B cell (primary cell): ENCODE measurements at regions of chr2 and their contacts with region 1.

Region 1: GRCh38 chr2:130372055-130372832 is 16.4 kb downstream of the PTPN18 start:
- DNase-seq: peak; percentile 89
- ATAC-seq: peak; percentile 82
- H3K4me3 ChIP-seq: peak overlapping the region; percentile 66 to 82 (median 75)
- H3K4me3 Mint-ChIP-seq: peak overlapping the region; percentile 99
- H3K27ac ChIP-seq: peak overlapping the region; percentile 48 to 76
- H3K27ac Mint-ChIP-seq: peak overlapping the region; percentile 99
- H3K4me1 ChIP-seq: peaks cover 32 to 62% of the 10 kb centered on the region in 2 donors
- H3K4me1 Mint-ChIP-seq: peaks cover 65% of the 10 kb centered on the region
- H3K27me3 ChIP-seq: no peaks in the 10 kb centered on the region
- H3K27me3 Mint-ChIP-seq: no peaks in the 10 kb centered on the region
- CTCF ChIP-seq: peak; percentile 81

Region 2: GRCh38 chr2:130355578-130356431 is 16.4 kb before region 1 on chr2 and contains the start of gene PTPN18:
- CTCF ChIA-PET with region 1: interaction called, 9 read pairs
- POLR2A ChIA-PET with region 1: no interaction called
- intact Hi-C with region 1: loop called (anchors 1 kb)
- DNase-seq: peak; percentile 72
- ATAC-seq: peak; percentile 93
- H3K4me3 ChIP-seq: peak within 1 kb of the TSS in 4 of 5 experiments; percentile 50 to 73 (median 69)
- H3K4me3 Mint-ChIP-seq: peak within 1 kb of the TSS; percentile 86
- H3K27ac ChIP-seq: no peak within 1 kb of the TSS
- H3K27ac Mint-ChIP-seq: peak within 1 kb of the TSS; percentile 48
- H3K4me1 ChIP-seq: peaks cover 9 to 31% of the 10 kb centered on the region in 2 donors
- H3K4me1 Mint-ChIP-seq: peaks cover 33% of the 10 kb centered on the region
- H3K27me3 ChIP-seq: peaks cover 0 to 7% (median 3%) of the 10 kb centered on the region in 4 experiments
- H3K27me3 Mint-ChIP-seq: no peaks in the 10 kb centered on the region
- CTCF ChIP-seq: peak; percentile 70
- total RNA-seq, gene PTPN18: 101 and 102 TPM in 2 replicates

Region 3: GRCh38 chr2:130385709-130386108 is 13.5 kb after region 1 on chr2:
- CTCF ChIA-PET with region 1: interaction called, 25 read pairs
- POLR2A ChIA-PET with region 1: interaction called, 7 read pairs
- intact Hi-C with region 1: no loop called
- DNase-seq: peak; percentile 41
- ATAC-seq: peak; percentile 60
- H3K4me3 ChIP-seq: no peak overlapping the region
- H3K4me3 Mint-ChIP-seq: peak overlapping the region; percentile 38
- H3K27ac ChIP-seq: peak overlapping the region in 1 of 2 donors; percentile 14
- H3K27ac Mint-ChIP-seq: peak overlapping the region; percentile 86
- H3K4me1 ChIP-seq: peaks cover 35 to 74% of the 10 kb centered on the region in 2 donors
- H3K4me1 Mint-ChIP-seq: peaks cover 77% of the 10 kb centered on the region
- H3K27me3 ChIP-seq: no peaks in the 10 kb centered on the region
- H3K27me3 Mint-ChIP-seq: no peaks in the 10 kb centered on the region
- CTCF ChIP-seq: no peak

Region 4: GRCh38 chr2:130391058-130391871 is 19.0 kb after region 1 on chr2:
- CTCF ChIA-PET with region 1: interaction called, 25 read pairs
- POLR2A ChIA-PET with region 1: interaction called, 7 read pairs
- intact Hi-C with region 1: loop called (anchors 1 kb)
- DNase-seq: peak; percentile 71
- ATAC-seq: peak; percentile 89
- H3K4me3 ChIP-seq: peak overlapping the region; percentile 48 to 72 (median 63)
- H3K4me3 Mint-ChIP-seq: peak overlapping the region; percentile 94
- H3K27ac ChIP-seq: peak overlapping the region; percentile 14 to 21
- H3K27ac Mint-ChIP-seq: peak overlapping the region; percentile 95
- H3K4me1 ChIP-seq: peaks cover 27 to 54% of the 10 kb centered on the region in 2 donors
- H3K4me1 Mint-ChIP-seq: peaks cover 52% of the 10 kb centered on the region
- H3K27me3 ChIP-seq: no peaks in the 10 kb centered on the region
- H3K27me3 Mint-ChIP-seq: no peaks in the 10 kb centered on the region
- CTCF ChIP-seq: no peak